IMR-90 (cell line): ENCODE measurements at regions of chr4 and their contacts with region 1.

Region 1: DNA sequence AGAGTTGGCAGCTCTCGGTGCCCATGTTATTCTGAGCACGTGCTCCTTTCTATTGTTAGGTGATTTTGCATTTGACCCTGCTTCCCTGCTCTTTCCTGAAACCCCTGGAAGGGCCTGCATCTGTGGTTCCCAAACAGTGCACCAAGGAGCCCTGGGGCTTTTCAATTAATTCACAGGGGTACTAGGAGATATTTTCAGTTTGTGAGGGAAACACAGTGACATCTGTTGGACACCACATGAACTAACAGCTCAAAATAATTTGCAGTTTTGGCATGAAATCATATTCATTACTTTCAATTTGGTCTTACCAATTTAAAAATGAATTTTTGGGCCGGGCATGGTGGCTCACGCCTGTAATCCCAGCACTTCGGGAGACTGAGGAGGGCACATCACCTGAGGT is 156.6 kb downstream of the GATB start:
- DNase-seq: peak; percentile 32
- ATAC-seq: peak; percentile 72
- H3K4me3 ChIP-seq: no peak overlapping the region
- H3K27ac ChIP-seq: no peak overlapping the region
- H3K4me1 ChIP-seq: peaks cover 3% of the 10 kb centered on the region; the same call in 1 of the 2 replicates
- H3K27me3 ChIP-seq: peaks cover 6% of the 10 kb centered on the region
- CTCF ChIP-seq: peak; percentile 57
- POLR2A ChIP-seq: no peak
- RAD21 ChIP-seq: peak; percentile 54

Region 2: GRCh38 chr4:151238477-151238876 is 365.8 kb before region 1 on chr4:
- CTCF ChIA-PET with region 1: no interaction called
- POLR2A ChIA-PET with region 1: no interaction called
- dilution Hi-C with region 1: no loop called
- in situ Hi-C with region 1: no loop called
- intact Hi-C with region 1: loop called (anchors 5 kb)
- DNase-seq: peak; percentile 6
- ATAC-seq: peak; percentile 61; the same call in 1 of the 2 replicates
- H3K4me3 ChIP-seq: no peak overlapping the region
- H3K27ac ChIP-seq: no peak overlapping the region
- H3K4me1 ChIP-seq: no peaks in the 10 kb centered on the region
- H3K27me3 ChIP-seq: no peaks in the 10 kb centered on the region
- CTCF ChIP-seq: no peak
- POLR2A ChIP-seq: no peak
- RAD21 ChIP-seq: no peak

Region 3: GRCh38 chr4:151276787-151277562 is 327.3 kb before region 1 on chr4 and contains the start of gene PRSS48:
- CTCF ChIA-PET with region 1: no interaction called
- POLR2A ChIA-PET with region 1: no interaction called
- dilution Hi-C with region 1: no loop called
- in situ Hi-C with region 1: no loop called
- intact Hi-C with region 1: loop called (anchors 2 kb)
- DNase-seq: peak; percentile 32
- ATAC-seq: peak; percentile 81
- H3K4me3 ChIP-seq: no peak within 1 kb of the TSS
- H3K27ac ChIP-seq: no peak within 1 kb of the TSS
- H3K4me1 ChIP-seq: 0 out of 2 replicates have a peak, but pooled peaks cover 1% of the 10 kb centered on the region
- H3K27me3 ChIP-seq: no peaks in the 10 kb centered on the region
- CTCF ChIP-seq: peak; percentile 70
- POLR2A ChIP-seq: no peak
- RAD21 ChIP-seq: peak; percentile 75
- total RNA-seq, gene PRSS48: not detected in 2 replicates